ENCODE measurements at regions of chr4 and their contacts with region 1.

Region 1: GRCh38 chr4:152970102-152970820 is 34.1 kb downstream of the FHDC1 start:
- DNase-seq: peak; percentile 77 to 92
- H3K4me3 ChIP-seq: no peak overlapping the region
- H3K27ac ChIP-seq: peak overlapping the region; percentile 88
- H3K4me1 ChIP-seq: peaks cover 59% of the 10 kb centered on the region
- H3K27me3 ChIP-seq: no peaks in the 10 kb centered on the region
- CTCF ChIP-seq: no peak

Region 2: GRCh38 chr4:153075836-153076518 is 105.7 kb after region 1 on chr4:
- CTCF ChIA-PET with region 1: interaction called, 17 read pairs
- POLR2A ChIA-PET with region 1: interaction called, 12 read pairs
- intact Hi-C with region 1: no loop called
- DNase-seq: no peak
- H3K4me3 ChIP-seq: no peak overlapping the region
- H3K27ac ChIP-seq: no peak overlapping the region
- H3K4me1 ChIP-seq: peaks cover 10% of the 10 kb centered on the region
- H3K27me3 ChIP-seq: no peaks in the 10 kb centered on the region
- CTCF ChIP-seq: no peak

Region 3: GRCh38 chr4:153083447-153083947 is 113.2 kb after region 1 on chr4:
- CTCF ChIA-PET with region 1: interaction called, 17 read pairs
- POLR2A ChIA-PET with region 1: interaction called, 12 read pairs
- intact Hi-C with region 1: no loop called
- DNase-seq: peak; percentile 55 to 66
- H3K4me3 ChIP-seq: no peak overlapping the region
- H3K27ac ChIP-seq: peak overlapping the region; percentile 49; the same call in 1 of the 2 replicates
- H3K4me1 ChIP-seq: peaks cover 18% of the 10 kb centered on the region
- H3K27me3 ChIP-seq: no peaks in the 10 kb centered on the region
- CTCF ChIP-seq: peak; percentile 70